Prostate gland (tissue), 2 donors: ENCODE measurements at regions of chr2 and their contacts with region 1.

Region 1: DNA sequence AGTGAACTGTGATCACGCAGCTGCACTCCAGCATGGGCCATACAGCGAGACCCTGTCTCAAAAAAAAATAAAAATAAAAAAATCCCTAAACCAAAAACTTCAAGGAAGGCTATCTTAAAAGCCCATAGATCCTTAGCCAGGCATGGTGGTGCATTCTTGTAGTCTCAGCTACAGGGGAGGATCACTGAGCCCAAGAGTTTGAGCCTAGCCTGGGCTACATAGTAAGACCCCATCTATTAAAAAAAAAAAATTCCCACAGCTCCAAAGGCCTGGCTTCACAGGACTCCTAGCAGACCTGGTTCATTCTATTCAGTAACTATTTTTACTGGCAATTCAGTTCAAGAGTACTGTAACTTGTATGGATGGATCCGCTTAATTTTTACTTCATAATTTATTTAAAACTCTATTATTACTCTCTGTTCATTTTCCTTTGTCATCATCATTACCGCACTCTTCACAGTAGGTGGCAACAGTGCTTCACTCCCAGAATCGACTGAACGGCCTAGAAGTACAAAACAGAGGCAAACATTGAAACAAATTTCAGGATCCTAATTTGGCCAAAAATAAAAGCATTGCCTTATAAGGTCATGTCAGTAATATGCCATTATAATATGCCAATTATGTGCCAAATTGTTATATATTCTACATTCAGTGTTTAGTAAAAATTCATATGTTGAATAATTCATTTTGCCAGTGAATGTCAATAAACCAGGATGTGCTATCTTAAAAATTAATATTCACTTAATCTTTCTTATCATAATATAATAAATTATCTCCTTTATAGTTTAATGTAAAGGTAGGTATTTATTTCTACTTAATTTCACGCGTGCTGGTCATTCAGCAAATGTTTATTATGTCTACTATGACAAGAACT is 14.3 kb upstream of the STAM2 start:
- DNase-seq: peak; percentile 32
- H3K4me3 ChIP-seq: no peak overlapping the region
- H3K27ac ChIP-seq: no peak overlapping the region
- H3K4me1 ChIP-seq: no peaks in the 10 kb centered on the region
- H3K27me3 ChIP-seq: no peaks in the 10 kb centered on the region
- CTCF ChIP-seq: peak; percentile 31 to 77 (median 62)
- POLR2A ChIP-seq: no peak

Region 2: GRCh38 chr2:152421521-152422370 is 231.9 kb after region 1 on chr2:
- intact Hi-C with region 1: no loop called
- DNase-seq: peak; percentile 56
- H3K4me3 ChIP-seq: no peak overlapping the region
- H3K27ac ChIP-seq: peak overlapping the region; percentile 22 to 44
- H3K4me1 ChIP-seq: no peaks in the 10 kb centered on the region
- H3K27me3 ChIP-seq: no peaks in the 10 kb centered on the region
- CTCF ChIP-seq: no peak
- POLR2A ChIP-seq: peak; percentile 27

Region 3: DNA sequence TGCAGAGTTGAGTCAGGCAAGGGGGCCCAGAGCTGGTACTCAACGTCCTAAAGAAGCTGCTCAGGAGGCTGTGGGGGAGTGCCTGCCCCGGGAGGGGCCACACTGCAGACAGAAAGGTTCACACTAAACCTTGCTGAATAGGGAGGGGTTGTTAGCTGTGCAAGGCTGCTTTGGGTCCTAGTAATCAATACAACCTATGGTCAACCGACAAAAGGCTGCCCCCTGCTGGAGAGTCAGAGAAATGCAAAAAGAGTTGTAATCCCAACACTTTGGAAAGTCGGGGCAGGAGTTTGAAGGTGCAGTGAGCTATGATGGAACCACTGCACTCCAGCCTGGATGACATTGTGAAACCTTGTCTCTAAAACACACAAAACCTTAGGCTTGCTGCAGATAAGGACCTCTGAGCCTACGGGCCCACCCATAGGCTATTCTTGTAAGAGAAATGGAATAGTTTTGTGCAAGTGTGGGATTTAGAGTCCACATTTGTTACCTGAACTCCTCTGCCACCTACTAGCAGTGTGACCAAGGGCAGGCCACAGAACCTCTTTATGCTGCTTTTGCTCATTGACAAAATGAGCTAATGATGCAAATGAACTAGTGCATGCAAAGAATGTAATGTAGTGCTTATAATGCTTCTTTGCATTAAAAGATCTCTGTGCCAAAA is 445.9 kb after region 1 on chr2:
- intact Hi-C with region 1: loop called (anchors 2 kb)
- DNase-seq: peak; percentile 16
- H3K4me3 ChIP-seq: no peak overlapping the region
- H3K27ac ChIP-seq: no peak overlapping the region
- H3K4me1 ChIP-seq: no peaks in the 10 kb centered on the region
- H3K27me3 ChIP-seq: no peaks in the 10 kb centered on the region
- CTCF ChIP-seq: peak; percentile 63 to 85 (median 80)
- POLR2A ChIP-seq: no peak